GM12878 (cell line): ENCODE measurements at regions of chr3 and their contacts with region 1.

Region 1: DNA sequence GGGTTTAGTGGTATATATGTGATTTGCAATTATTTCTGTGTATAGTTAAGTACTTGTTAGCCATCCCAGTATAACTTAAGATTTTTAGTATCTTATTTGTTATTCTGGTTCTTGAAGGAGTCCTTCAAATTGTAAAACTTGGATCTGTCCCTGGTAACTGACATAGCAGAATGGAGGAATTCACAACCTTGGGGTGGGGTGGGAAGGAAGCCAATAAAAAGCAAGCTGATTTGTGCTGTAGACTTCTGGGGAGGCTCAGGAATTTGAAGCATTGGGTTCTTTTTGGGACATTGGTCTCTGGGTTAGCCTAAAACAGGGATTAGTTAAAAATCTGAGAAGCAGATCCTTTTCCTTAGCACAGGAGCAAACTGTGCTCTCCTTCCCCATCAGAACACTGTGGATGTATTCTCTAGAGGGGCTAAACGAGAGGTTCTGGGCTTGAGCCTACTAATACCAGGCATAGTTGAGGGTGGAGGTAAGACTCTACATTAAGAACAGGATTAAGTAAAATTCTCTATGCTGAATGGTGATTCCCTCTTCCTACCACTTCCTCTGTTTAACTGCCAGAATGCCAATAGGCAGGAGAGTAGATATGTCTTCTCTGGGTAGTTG is 42.2 kb downstream of the GMPS start:
- DNase-seq: no peak
- ATAC-seq: no peak
- H3K4me3 ChIP-seq: no peak overlapping the region
- H3K27ac ChIP-seq: no peak overlapping the region
- H3K4me1 ChIP-seq: no peaks in the 10 kb centered on the region
- H3K27me3 ChIP-seq: no peaks in the 10 kb centered on the region
- CTCF ChIP-seq: no peak
- EP300 ChIP-seq: no peak
- POLR2A ChIP-seq: no peak
- RAD21 ChIP-seq: no peak

Region 2: GRCh38 chr3:155846119-155846518 is 66.6 kb before region 1 on chr3:
- CTCF ChIA-PET with region 1: no interaction called
- POLR2A ChIA-PET with region 1: interaction called, 11 read pairs
- RAD21 ChIA-PET with region 1: no interaction called
- SMC1A ChIA-PET with region 1: no interaction called
- in situ Hi-C with region 1: no loop called
- intact Hi-C with region 1: no loop called
- DNase-seq: no peak
- ATAC-seq: peak; percentile 63
- H3K4me3 ChIP-seq: 0 out of 2 replicates have a peak overlapping the region, but pooled peaks have one; percentile 32
- H3K27ac ChIP-seq: no peak overlapping the region
- H3K4me1 ChIP-seq: peaks cover 11% of the 10 kb centered on the region
- H3K27me3 ChIP-seq: no peaks in the 10 kb centered on the region
- CTCF ChIP-seq: no peak
- EP300 ChIP-seq: no peak
- POLR2A ChIP-seq: no peak
- RAD21 ChIP-seq: no peak